PC-9 (cell line): ENCODE measurements at regions of chr7 and their contacts with region 1.

Region 1: DNA sequence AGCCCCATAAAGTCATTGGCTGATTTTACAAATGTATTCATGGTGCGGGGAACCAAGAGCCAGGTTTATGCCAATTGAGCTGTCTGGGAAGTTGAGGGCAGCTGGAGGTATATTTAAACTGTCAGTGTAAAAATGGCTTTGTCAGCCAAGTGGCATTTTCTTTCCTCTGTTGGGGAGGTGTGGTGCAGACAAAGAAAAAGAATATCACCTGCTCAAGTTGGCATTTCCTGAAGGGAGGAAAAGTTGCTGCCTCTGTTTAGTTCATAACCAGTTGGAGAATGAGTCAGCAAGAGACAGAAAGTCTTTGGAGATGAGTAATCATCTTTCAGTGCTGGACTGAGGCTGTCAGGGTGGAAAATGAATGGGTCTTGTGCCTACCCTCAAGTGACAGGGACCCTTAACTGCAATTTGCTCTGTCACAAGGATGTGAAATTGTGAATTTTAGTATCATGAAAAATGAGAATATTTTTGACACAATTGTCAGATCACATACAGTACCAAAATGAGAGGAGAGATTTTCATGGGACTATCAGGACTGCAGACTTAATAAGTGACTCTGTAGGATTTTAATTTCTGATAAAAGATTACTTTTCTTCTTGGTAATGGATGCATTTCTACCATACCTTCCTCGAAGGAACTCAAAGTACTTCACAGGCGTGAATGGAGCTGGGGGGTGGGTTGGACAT is 137.3 kb downstream of the ANLN start:
- DNase-seq: peak; percentile 51 to 59
- H3K4me3 ChIP-seq: no peak overlapping the region
- H3K27ac ChIP-seq: no peak overlapping the region
- H3K4me1 ChIP-seq: peaks cover 6% of the 10 kb centered on the region; the same call in 1 of the 2 replicates
- H3K27me3 ChIP-seq: peaks cover 12% of the 10 kb centered on the region
- CTCF ChIP-seq: no peak

Region 2: GRCh38 chr7:36227223-36227622 is 299.8 kb before region 1 on chr7:
- CTCF ChIA-PET with region 1: no interaction called
- POLR2A ChIA-PET with region 1: no interaction called
- intact Hi-C with region 1: no loop called
- DNase-seq: no peak
- H3K4me3 ChIP-seq: no peak overlapping the region
- H3K27ac ChIP-seq: no peak overlapping the region
- H3K4me1 ChIP-seq: peaks cover 2% of the 10 kb centered on the region
- H3K27me3 ChIP-seq: no peaks in the 10 kb centered on the region
- CTCF ChIP-seq: no peak

Region 3: DNA sequence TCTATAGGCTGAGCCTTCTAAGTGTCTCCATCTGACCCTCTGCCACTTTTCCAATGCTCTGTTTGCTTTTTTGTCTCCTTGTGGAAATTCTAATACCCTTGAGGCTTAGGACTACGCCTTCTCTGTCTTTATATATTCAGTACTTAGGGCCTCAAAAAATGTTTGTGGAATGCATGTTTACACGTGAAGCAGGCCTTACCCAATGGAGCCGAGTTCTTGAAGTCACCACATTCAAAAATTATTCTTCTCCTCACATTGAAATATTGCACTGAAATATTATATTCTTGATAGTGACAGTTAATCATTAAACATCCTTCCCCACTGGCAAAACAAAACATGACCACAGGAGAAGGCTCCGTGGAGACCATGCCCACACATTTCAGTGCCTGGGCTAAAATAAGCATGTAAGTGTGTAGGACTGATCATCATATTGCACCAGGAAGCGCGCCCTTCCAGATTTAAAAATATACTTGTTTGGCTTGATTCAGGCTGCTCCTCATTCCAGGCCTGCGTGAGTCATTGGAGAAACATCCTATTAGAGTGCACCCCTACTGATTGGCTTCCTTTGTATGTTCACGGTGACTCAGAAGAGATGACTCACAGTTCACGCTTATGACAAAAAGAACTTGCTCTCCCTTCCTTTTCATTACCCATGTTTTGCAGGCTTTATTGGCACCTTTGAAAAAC is 504.7 kb after region 1 on chr7:
- CTCF ChIA-PET with region 1: no interaction called
- POLR2A ChIA-PET with region 1: no interaction called
- intact Hi-C with region 1: loop called (anchors 5 kb)
- DNase-seq: peak; percentile 82 to 98
- H3K4me3 ChIP-seq: peak overlapping the region; percentile 1; the same call in 1 of the 2 replicates
- H3K27ac ChIP-seq: peak overlapping the region; percentile 56
- H3K4me1 ChIP-seq: peaks cover 20% of the 10 kb centered on the region
- H3K27me3 ChIP-seq: no peaks in the 10 kb centered on the region
- CTCF ChIP-seq: no peak